CD8-positive, alpha-beta memory T cell (primary cell): ENCODE measurements at regions of chr2 and their contacts with region 1.

Region 1: GRCh38 chr2:7057865-7058400 is 140.7 kb downstream of the RNF144A start:
- DNase-seq: peak in 2 of 5 donors; percentile 36 to 51
- H3K4me3 ChIP-seq: peak overlapping the region; percentile 23
- H3K4me3 Mint-ChIP-seq: peak overlapping the region; percentile 11 to 88 (median 74)
- H3K27ac ChIP-seq: no peak overlapping the region
- H3K27ac Mint-ChIP-seq: peak overlapping the region in 7 of 8 donors; percentile 21 to 94 (median 80)
- H3K4me1 ChIP-seq: peaks cover 54% of the 10 kb centered on the region
- H3K4me1 Mint-ChIP-seq: peaks cover 0 to 17% (median 5%) of the 10 kb centered on the region in 3 donors
- H3K27me3 ChIP-seq: no peaks in the 10 kb centered on the region
- H3K27me3 Mint-ChIP-seq: no peaks in the 10 kb centered on the region

Region 2: GRCh38 chr2:6826081-6826913 is 231.6 kb before region 1 on chr2:
- CTCF ChIA-PET with region 1: no interaction called
- POLR2A ChIA-PET with region 1: no interaction called
- DNase-seq: peak; percentile 22 to 56 (median 28)
- H3K4me3 ChIP-seq: no peak overlapping the region
- H3K4me3 Mint-ChIP-seq: no peak overlapping the region
- H3K27ac ChIP-seq: no peak overlapping the region
- H3K27ac Mint-ChIP-seq: no peak overlapping the region
- H3K4me1 ChIP-seq: no peaks in the 10 kb centered on the region
- H3K4me1 Mint-ChIP-seq: peaks cover 5 to 10% (median 6%) of the 10 kb centered on the region in 3 donors
- H3K27me3 ChIP-seq: no peaks in the 10 kb centered on the region
- H3K27me3 Mint-ChIP-seq: peaks cover 0 to 5% of the 10 kb centered on the region in 2 donors

Region 3: DNA sequence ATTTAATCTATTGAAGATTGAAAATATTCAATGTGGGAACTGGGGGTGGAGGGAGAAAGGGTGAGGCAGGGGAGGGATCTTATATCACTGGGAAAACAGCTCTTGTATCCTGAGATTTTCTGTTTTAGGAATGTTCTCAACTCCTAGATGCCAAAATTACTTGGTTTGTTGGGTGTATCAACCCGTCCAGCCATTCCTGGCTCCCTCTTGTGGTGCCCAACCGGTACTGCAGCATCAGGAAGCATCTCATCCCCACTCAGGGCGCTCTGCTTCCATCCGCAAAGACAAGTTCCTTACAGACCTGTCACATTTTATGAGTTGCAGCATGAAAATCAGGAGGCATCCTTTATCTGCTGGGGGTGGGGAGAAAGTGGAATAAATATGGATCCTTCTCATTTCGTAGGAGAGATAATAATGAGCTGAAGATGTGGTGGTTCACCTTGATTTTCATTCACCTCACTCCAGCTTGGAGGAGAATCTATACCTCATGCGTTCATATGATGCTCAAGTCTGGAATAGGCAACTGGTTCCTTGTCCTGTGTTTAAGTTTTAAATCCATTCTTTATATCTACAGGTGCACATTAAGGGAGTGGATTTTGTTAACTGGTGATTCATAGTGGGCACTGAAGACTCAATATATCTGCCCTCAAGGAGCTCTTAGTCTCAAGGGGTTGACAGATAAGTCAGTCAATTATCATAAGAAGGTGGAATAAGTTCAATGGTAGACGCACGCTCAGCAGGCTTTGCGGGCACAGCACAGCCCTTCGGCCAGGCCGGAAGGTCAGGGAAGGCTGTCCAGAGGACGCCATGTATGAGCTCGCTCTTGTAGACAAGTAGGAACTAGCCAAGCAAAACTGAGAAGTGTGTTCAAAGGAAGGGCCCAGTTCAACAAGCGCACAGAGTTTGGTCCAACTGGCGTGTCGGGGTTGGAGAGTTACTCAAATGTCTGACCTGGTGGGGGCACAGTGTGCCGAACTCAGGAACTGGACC is 13.4 kb before region 1 on chr2:
- CTCF ChIA-PET with region 1: interaction called, 21 read pairs
- POLR2A ChIA-PET with region 1: no interaction called
- DNase-seq: peak; percentile 41 to 81 (median 51)
- H3K4me3 ChIP-seq: no peak overlapping the region
- H3K4me3 Mint-ChIP-seq: no peak overlapping the region
- H3K27ac ChIP-seq: no peak overlapping the region
- H3K27ac Mint-ChIP-seq: peak overlapping the region in 1 of 8 donors; percentile 3
- H3K4me1 ChIP-seq: no peaks in the 10 kb centered on the region
- H3K4me1 Mint-ChIP-seq: peaks cover 7 to 13% (median 10%) of the 10 kb centered on the region in 3 donors
- H3K27me3 ChIP-seq: no peaks in the 10 kb centered on the region
- H3K27me3 Mint-ChIP-seq: no peaks in the 10 kb centered on the region